Ascending aorta (tissue), 2 donors: ENCODE measurements at regions of chr6 and their contacts with region 1.

Region 1: DNA sequence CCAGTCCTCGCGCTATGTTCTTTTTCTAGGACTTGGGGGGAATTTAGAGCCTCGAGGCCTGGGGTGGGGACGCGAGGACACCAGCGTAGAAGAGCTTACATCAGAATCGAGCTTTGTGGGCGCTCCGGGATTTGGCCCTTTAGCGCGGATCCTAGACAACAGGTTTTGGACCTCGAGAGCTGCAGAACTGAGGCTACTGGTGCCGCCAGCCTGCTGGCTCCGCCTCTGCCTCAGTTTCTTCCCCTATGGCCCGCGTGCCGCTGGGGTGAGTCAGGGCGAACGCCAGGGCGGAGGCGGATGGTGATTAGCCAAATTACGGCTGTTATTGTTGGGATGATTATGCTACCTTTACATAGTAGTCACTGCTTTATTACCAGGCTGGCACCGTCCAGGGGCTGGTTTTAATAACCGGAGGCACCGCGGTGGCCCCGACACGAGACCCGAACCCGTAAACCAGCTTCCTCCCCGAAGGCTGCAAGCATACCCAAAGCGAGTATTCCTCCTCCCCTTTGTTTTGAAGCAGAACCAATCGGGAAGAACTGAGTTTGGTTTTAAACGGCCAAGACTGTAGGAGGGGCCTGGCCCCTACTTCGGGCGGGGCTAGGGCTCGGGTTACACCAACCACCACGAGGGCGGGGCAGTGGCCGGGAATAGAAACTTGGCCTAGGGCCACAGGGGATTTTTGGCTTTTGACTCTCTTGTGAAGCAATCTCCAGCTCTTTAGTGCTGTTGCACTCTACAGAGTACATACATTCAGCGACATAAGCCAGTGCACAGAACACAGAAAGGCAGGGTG is 639 bp upstream of the GTPBP2 start:
- DNase-seq: peak; percentile 86 to 98
- H3K4me3 ChIP-seq: peak overlapping the region; percentile 97 to 99
- H3K27ac ChIP-seq: peak overlapping the region; percentile 97 to 98
- H3K4me1 ChIP-seq: peaks cover 5 to 19% of the 10 kb centered on the region in 2 donors
- H3K27me3 ChIP-seq: no peaks in the 10 kb centered on the region
- CTCF ChIP-seq: no peak

Region 2: GRCh38 chr6:43143235-43144124 is 486.2 kb before region 1 on chr6:
- intact Hi-C with region 1: no loop called
- DNase-seq: peak; percentile 29 to 93
- H3K4me3 ChIP-seq: no peak overlapping the region
- H3K27ac ChIP-seq: peak overlapping the region in 1 of 2 donors; percentile 9
- H3K4me1 ChIP-seq: peaks cover 0 to 3% of the 10 kb centered on the region in 2 donors
- H3K27me3 ChIP-seq: no peaks in the 10 kb centered on the region
- CTCF ChIP-seq: peak; percentile 94 to 97 (median 95)

Region 3: GRCh38 chr6:43369174-43370022 is 260.3 kb before region 1 on chr6 and contains the start of gene ZNF318:
- intact Hi-C with region 1: loop called (anchors 2 kb)
- DNase-seq: peak; percentile 85 to 97
- H3K4me3 ChIP-seq: peak within 1 kb of the TSS; percentile 83 to 97
- H3K27ac ChIP-seq: peak within 1 kb of the TSS; percentile 80 to 88
- H3K4me1 ChIP-seq: peaks cover 3 to 14% of the 10 kb centered on the region in 2 donors
- H3K27me3 ChIP-seq: no peaks in the 10 kb centered on the region
- CTCF ChIP-seq: no peak
- total RNA-seq, gene ZNF318: 4.4 TPM

Region 4: GRCh38 chr6:43667245-43668150 is 37.8 kb after region 1 on chr6:
- intact Hi-C with region 1: loop called (anchors 2 kb)
- DNase-seq: peak; percentile 38 to 90
- H3K4me3 ChIP-seq: peak overlapping the region in 1 of 2 donors; percentile 35
- H3K27ac ChIP-seq: peak overlapping the region; percentile 62 to 79
- H3K4me1 ChIP-seq: peaks cover 22 to 29% of the 10 kb centered on the region in 2 donors
- H3K27me3 ChIP-seq: no peaks in the 10 kb centered on the region
- CTCF ChIP-seq: peak; percentile 91 to 98 (median 95)

Region 5: GRCh38 chr6:44058617-44059358 is 429.1 kb after region 1 on chr6:
- intact Hi-C with region 1: loop called (anchors 1 kb)
- DNase-seq: peak; percentile 90 to 96
- H3K4me3 ChIP-seq: peak overlapping the region in 1 of 2 donors; percentile 14
- H3K27ac ChIP-seq: peak overlapping the region; percentile 86 to 91
- H3K4me1 ChIP-seq: peaks cover 29 to 42% of the 10 kb centered on the region in 2 donors
- H3K27me3 ChIP-seq: no peaks in the 10 kb centered on the region
- CTCF ChIP-seq: no peak

Region 6: GRCh38 chr6:44237813-44238433 is 608.2 kb after region 1 on chr6:
- intact Hi-C with region 1: loop called (anchors 5 kb)
- DNase-seq: peak; percentile 72 to 93
- H3K4me3 ChIP-seq: peak overlapping the region; percentile 51 to 79
- H3K27ac ChIP-seq: peak overlapping the region; percentile 97 to 100
- H3K4me1 ChIP-seq: peaks cover 25 to 50% of the 10 kb centered on the region in 2 donors
- H3K27me3 ChIP-seq: no peaks in the 10 kb centered on the region
- CTCF ChIP-seq: peak; percentile 97 to 99 (median 98)